Activated CD8-positive, alpha-beta memory T cell treated with anti-CD3 and anti-CD28 coated beads, Interleukin-2, amount 10 ng/mL, durations not matched to agents 7 days and 5 days (primary cell): ENCODE measurements at regions of chr19 and their contacts with region 1.

Region 1: DNA sequence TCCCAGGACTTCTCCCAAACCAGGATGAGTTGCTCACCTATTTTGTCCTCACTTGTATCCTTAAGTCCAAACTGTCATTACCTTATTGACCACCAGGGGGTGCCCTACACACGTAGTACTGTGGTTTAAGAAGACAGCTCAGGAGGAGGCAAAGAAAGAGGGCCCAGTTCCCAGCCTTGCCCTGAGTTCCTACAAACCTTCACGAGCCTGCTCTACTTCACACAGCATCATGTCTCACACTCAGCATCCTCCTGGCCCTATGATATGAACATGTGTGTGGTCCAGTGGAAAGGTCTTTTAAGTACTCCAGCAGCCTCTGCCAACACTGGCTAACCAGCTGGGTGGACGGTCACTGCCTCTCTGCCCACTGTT is 8.1 kb upstream of the ZNF784 start:
- DNase-seq: peak; percentile 95
- ATAC-seq: peak; percentile 43
- H3K4me3 Mint-ChIP-seq: no peak overlapping the region
- H3K27ac Mint-ChIP-seq: peak overlapping the region; percentile 38
- H3K4me1 Mint-ChIP-seq: peaks cover 46% of the 10 kb centered on the region
- H3K27me3 Mint-ChIP-seq: peaks cover 4% of the 10 kb centered on the region

Region 2: GRCh38 chr19:55516878-55517620 is 115.4 kb before region 1 on chr19:
- CTCF ChIA-PET with region 1: interaction called, 72 read pairs
- DNase-seq: peak; percentile 92
- ATAC-seq: peak; percentile 100
- H3K4me3 Mint-ChIP-seq: peak overlapping the region; percentile 54
- H3K27ac Mint-ChIP-seq: peak overlapping the region; percentile 71
- H3K4me1 Mint-ChIP-seq: peaks cover 3% of the 10 kb centered on the region
- H3K27me3 Mint-ChIP-seq: peaks cover 6% of the 10 kb centered on the region

Region 3: DNA sequence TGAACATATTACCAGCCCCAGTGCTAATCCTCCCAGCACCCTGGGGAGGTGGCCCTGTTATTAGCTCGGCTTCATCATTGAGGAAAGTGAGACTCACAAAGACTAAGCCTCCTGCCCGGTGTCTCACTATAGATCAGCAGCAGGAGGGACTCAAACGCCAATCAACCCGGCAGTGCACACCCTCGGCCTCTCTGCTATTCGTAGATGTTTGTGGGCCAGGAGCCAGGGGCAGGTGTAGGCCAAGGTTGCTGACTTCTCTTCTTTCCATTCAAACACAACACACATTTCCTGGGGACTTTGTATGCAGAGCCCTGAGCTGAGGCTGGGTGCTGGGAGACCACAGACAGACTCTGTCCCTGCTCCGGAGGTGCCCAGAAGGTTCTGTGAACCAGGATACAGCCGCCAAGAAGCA is 77.7 kb before region 1 on chr19:
- CTCF ChIA-PET with region 1: no interaction called
- DNase-seq: no peak
- ATAC-seq: no peak
- H3K4me3 Mint-ChIP-seq: no peak overlapping the region
- H3K27ac Mint-ChIP-seq: no peak overlapping the region
- H3K4me1 Mint-ChIP-seq: peaks cover 2% of the 10 kb centered on the region
- H3K27me3 Mint-ChIP-seq: peaks cover 6% of the 10 kb centered on the region

Region 4: GRCh38 chr19:55599468-55600279 is 32.8 kb before region 1 on chr19 and contains the start of gene FIZ1:
- CTCF ChIA-PET with region 1: interaction called, 31 read pairs
- DNase-seq: peak; percentile 98
- ATAC-seq: peak; percentile 77
- H3K4me3 Mint-ChIP-seq: peak within 1 kb of the TSS; percentile 86
- H3K27ac Mint-ChIP-seq: peak within 1 kb of the TSS; percentile 99
- H3K4me1 Mint-ChIP-seq: peaks cover 27% of the 10 kb centered on the region
- H3K27me3 Mint-ChIP-seq: no peaks in the 10 kb centered on the region
- total RNA-seq, gene FIZ1: 13.0 to 15.7 TPM

Region 5: GRCh38 chr19:55643348-55644176 is 11.1 kb after region 1 on chr19 and contains the start of gene ZNF581:
- CTCF ChIA-PET with region 1: interaction called, 74 read pairs
- DNase-seq: peak; percentile 85
- ATAC-seq: peak; percentile 66
- H3K4me3 Mint-ChIP-seq: peak within 1 kb of the TSS; percentile 87
- H3K27ac Mint-ChIP-seq: peak within 1 kb of the TSS; percentile 95
- H3K4me1 Mint-ChIP-seq: peaks cover 47% of the 10 kb centered on the region
- H3K27me3 Mint-ChIP-seq: no peaks in the 10 kb centered on the region
- total RNA-seq, gene ZNF581: 23.7 to 25.4 TPM

Region 6: GRCh38 chr19:55670280-55671053 is 38.0 kb after region 1 on chr19:
- CTCF ChIA-PET with region 1: interaction called, 13 read pairs
- DNase-seq: no peak
- ATAC-seq: no peak
- H3K4me3 Mint-ChIP-seq: no peak overlapping the region
- H3K27ac Mint-ChIP-seq: no peak overlapping the region
- H3K4me1 Mint-ChIP-seq: peaks cover 26% of the 10 kb centered on the region
- H3K27me3 Mint-ChIP-seq: no peaks in the 10 kb centered on the region

Region 7: GRCh38 chr19:55778331-55778730 is 145.9 kb after region 1 on chr19:
- CTCF ChIA-PET with region 1: no interaction called
- DNase-seq: no peak
- ATAC-seq: no peak
- H3K4me3 Mint-ChIP-seq: no peak overlapping the region
- H3K27ac Mint-ChIP-seq: no peak overlapping the region
- H3K4me1 Mint-ChIP-seq: no peaks in the 10 kb centered on the region
- H3K27me3 Mint-ChIP-seq: no peaks in the 10 kb centered on the region

Region 8: DNA sequence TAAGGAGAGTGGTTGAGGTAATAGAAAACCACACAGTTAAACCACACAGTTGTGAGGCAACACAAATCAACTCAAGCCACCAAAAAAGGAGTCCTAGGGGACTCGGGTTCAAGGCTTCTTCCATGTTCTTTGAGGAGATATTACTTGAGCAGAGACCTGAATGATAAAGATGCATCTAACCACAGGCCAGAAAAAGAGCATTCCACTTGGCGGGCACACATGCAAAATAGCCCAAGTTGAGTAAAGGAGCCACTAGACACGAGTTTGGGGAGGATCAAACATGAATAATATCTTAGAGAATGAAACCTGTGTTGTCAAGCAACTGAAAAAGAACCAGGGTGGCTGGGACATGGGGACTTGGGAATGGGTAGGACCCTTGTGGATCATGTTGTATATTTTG is 234.1 kb after region 1 on chr19:
- CTCF ChIA-PET with region 1: no interaction called
- DNase-seq: no peak
- ATAC-seq: no peak
- H3K4me3 Mint-ChIP-seq: no peak overlapping the region
- H3K27ac Mint-ChIP-seq: no peak overlapping the region
- H3K4me1 Mint-ChIP-seq: no peaks in the 10 kb centered on the region
- H3K27me3 Mint-ChIP-seq: no peaks in the 10 kb centered on the region